Ovary (tissue), 10 donors: ENCODE measurements at regions of chr5 and their contacts with region 1.

Region 1: DNA sequence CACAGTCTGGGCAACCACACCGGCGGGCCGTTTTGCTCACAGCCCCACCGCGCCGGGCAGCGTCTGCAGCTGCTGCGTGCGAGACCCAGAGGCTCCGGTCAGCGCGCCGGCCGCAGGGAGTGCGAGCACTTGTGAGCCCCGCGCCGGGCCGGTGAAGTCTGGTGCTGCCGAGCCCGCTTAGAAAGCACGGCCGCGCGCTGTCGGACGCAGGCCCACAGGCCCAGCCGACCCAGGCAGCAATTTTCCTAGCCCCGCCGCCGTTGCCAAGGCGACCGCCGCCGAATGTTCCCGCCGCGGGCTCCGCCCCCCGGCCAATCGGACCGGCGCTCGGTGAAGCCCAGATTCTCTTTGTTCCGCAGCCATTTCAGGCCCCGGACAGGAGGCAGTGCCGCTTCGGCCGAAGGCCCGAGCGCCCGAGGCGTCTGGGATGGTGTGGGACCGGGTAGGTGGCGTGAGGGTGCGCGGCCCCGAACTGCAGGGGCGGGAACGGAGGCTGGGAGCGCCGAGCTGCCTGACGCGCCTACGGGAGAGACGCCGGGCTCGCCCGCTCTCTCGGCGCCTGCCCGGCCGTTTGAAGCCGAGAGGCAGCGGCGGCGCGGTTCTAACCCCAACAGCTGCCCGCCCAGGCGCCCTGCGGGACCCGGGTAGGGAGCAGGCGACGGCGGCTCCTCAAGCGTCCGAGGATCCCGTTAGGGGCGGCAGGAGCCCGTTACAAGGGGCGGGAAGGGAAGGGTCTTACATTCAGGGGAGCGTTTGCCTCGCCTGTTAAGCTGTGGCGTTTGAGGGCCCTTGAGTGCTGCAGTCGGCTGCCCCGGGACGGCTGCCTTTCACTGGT is at the start of gene TNPO1:
- DNase-seq: peak; percentile 93 to 98 (median 95)
- H3K4me3 ChIP-seq: peak within 1 kb of the TSS; percentile 78
- H3K27ac ChIP-seq: peak within 1 kb of the TSS; percentile 89 to 93
- H3K4me1 ChIP-seq: no peaks in the 10 kb centered on the region
- H3K27me3 ChIP-seq: no peaks in the 10 kb centered on the region
- CTCF ChIP-seq: peak in 2 of 3 donors; percentile 1 to 7
- EP300 ChIP-seq: no peak
- POLR2A ChIP-seq: peak; percentile 86
- total RNA-seq, gene TNPO1: 48.6 to 99.3 (median 77.8) TPM

Region 2: GRCh38 chr5:72681781-72682180 is 134.7 kb before region 1 on chr5:
- intact Hi-C with region 1: no loop called
- DNase-seq: no peak
- H3K4me3 ChIP-seq: no peak overlapping the region
- H3K27ac ChIP-seq: no peak overlapping the region
- H3K4me1 ChIP-seq: no peaks in the 10 kb centered on the region
- H3K27me3 ChIP-seq: no peaks in the 10 kb centered on the region
- CTCF ChIP-seq: no peak
- EP300 ChIP-seq: no peak
- POLR2A ChIP-seq: no peak

Region 3: DNA sequence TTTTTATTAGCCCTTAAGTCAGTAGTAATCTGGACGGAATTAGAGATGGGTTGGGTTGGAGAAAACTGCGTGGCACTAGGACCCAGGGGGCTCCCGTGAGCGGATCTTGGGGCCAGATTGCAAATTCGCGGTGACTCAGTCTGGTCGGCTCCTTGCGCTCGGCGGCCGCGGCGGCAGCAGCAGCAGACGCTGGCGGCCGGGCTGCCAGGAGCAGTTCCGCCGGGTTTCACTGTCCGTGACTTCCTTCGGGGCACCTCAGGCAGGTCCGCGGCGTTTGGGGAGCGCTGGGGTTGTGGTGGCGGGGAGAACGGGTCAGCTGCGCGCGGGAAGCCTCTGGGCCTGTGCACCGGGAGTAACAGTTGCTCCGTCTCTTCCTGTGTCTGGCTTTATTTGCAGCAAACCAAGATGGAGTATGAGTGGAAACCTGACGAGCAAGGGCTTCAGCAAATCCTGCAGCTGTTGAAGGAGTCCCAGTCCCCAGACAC is 31.5 kb after region 1 on chr5:
- intact Hi-C with region 1: loop called in 1 of 4 experiments (anchors 2 kb)
- DNase-seq: peak; percentile 82 to 88 (median 85)
- H3K4me3 ChIP-seq: peak overlapping the region; percentile 80
- H3K27ac ChIP-seq: peak overlapping the region; percentile 54 to 76
- H3K4me1 ChIP-seq: peaks cover 8% of the 10 kb centered on the region
- H3K27me3 ChIP-seq: no peaks in the 10 kb centered on the region
- CTCF ChIP-seq: no peak
- EP300 ChIP-seq: no peak
- POLR2A ChIP-seq: peak; percentile 68

Region 4: GRCh38 chr5:72955768-72956323 is 139.3 kb after region 1 on chr5 and contains the start of gene FCHO2:
- intact Hi-C with region 1: loop called in 1 of 4 experiments (anchors 10 kb)
- DNase-seq: peak; percentile 98 to 100 (median 99)
- H3K4me3 ChIP-seq: peak within 1 kb of the TSS; percentile 87
- H3K27ac ChIP-seq: peak within 1 kb of the TSS; percentile 99
- H3K4me1 ChIP-seq: peaks cover 4% of the 10 kb centered on the region
- H3K27me3 ChIP-seq: no peaks in the 10 kb centered on the region
- CTCF ChIP-seq: peak; percentile 89 to 93 (median 91)
- EP300 ChIP-seq: no peak
- POLR2A ChIP-seq: peak; percentile 57
- total RNA-seq, gene FCHO2: 25.2 to 34.4 (median 26.1) TPM